ENCODE measurements at regions of chr4 and their contacts with region 1.

Region 1: DNA sequence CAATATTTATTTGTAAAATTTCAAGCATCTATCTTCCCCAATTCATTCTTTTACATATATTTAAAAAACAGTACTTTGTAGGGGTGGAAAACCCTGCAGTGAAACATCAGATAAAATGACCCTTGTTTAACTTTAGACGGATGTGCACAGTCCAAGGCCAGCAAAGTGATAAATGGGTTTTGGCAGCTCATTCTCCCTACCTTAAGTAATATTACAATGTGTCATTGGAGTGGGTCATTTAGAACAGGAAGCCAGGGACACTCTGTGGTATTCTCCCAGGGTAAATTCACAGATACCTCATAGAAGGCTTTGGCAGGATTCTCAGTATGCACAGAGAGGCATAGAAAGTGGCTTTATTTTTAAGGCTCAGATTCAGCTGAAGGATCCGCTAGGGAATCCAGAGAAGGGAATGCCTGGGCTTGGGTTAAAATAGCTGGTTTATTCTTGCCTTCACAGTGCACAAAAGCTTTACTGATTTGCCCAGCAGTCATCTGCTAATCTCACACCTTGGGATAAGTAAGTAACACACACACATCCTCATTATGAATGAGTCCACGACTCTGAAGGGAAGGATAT is 206.7 kb downstream of the RASL11B start:
- DNase-seq: peak; percentile 65
- ATAC-seq: peak; percentile 75
- H3K4me3 ChIP-seq: no peak overlapping the region
- H3K27ac ChIP-seq: peak overlapping the region; percentile 59
- H3K4me1 ChIP-seq: peaks cover 23% of the 10 kb centered on the region
- H3K27me3 ChIP-seq: no peaks in the 10 kb centered on the region
- CTCF ChIP-seq: no peak
- EP300 ChIP-seq: peak in 1 of 2 experiments; percentile 62; a peak in 2 of 4 replicates
- POLR2A ChIP-seq: no peak
- RAD21 ChIP-seq: no peak

Region 2: DNA sequence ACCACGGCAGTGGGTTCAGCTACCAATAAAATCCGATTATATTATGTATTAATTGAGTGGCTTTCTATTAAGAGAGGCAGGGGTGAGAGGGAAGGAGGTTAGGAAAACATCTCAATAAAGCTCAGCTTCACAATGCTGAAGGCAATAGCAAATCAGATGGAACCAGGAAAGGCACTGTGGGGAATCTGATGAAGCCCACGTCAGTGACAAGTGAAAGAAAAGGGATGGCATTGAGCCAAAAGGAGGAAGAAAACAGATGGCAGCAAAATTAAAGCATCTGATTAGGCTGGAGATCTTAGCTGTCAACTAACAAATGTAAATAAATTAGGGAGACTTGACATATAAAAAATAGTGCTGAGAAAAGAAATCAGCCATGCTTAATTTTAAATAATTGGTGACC is 25.8 kb before region 1 on chr4:
- CTCF ChIA-PET with region 1: no interaction called
- POLR2A ChIA-PET with region 1: no interaction called
- in situ Hi-C with region 1: no loop called
- intact Hi-C with region 1: no loop called
- DNase-seq: no peak
- ATAC-seq: no peak
- H3K4me3 ChIP-seq: no peak overlapping the region
- H3K27ac ChIP-seq: no peak overlapping the region
- H3K4me1 ChIP-seq: peaks cover 9% of the 10 kb centered on the region
- H3K27me3 ChIP-seq: no peaks in the 10 kb centered on the region
- CTCF ChIP-seq: no peak
- EP300 ChIP-seq: no peak
- POLR2A ChIP-seq: no peak
- RAD21 ChIP-seq: no peak

Region 3: DNA sequence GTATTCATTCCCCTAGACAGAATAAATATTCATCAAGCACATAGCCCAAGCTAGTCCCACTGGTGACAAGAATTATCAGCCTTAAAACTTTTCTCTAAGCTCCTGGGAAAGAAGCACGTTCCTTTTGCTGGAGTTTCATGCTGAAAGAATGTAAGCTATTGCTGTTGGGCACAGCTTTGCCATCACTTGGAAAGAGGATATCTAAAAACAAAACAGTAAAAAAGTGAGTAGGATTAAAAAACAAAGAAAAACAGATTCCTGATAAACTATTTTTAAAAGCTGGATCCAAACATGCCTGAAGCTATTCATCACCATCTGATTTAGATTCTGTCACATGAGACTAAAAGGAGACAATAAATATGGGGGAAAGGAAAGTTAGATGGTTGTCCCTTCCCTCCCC is 120.2 kb after region 1 on chr4:
- CTCF ChIA-PET with region 1: no interaction called
- POLR2A ChIA-PET with region 1: no interaction called
- in situ Hi-C with region 1: no loop called
- intact Hi-C with region 1: loop called (anchors 5 kb)
- DNase-seq: no peak
- ATAC-seq: no peak
- H3K4me3 ChIP-seq: no peak overlapping the region
- H3K27ac ChIP-seq: peak overlapping the region; percentile 80
- H3K4me1 ChIP-seq: peaks cover 46% of the 10 kb centered on the region
- H3K27me3 ChIP-seq: no peaks in the 10 kb centered on the region
- CTCF ChIP-seq: no peak
- EP300 ChIP-seq: no peak
- POLR2A ChIP-seq: no peak
- RAD21 ChIP-seq: no peak

Measured in HepG2 (cell line).